Activated T-helper 1 cell treated with anti-CD3 and anti-CD28 coated beads, Interleukin-12 subunit alpha, Interleukin-12 subunit beta, Interleukin-2, Interleukin-4 antibody, amounts not matched to agents 30 ng/mL and 10 ng/mL and 1 ng/mL, durations not matched to agents 14 hours and 24 hours and 36 hours (primary cell): ENCODE measurements at regions of chr6 and their contacts with region 1.

Region 1: GRCh38 chr6:26285143-26286134 is 79.6 kb upstream of the BTN3A2 start:
- DNase-seq: peak; percentile 95
- H3K4me3 Mint-ChIP-seq: peak overlapping the region; percentile 93
- H3K27ac Mint-ChIP-seq: peak overlapping the region; percentile 93
- H3K4me1 Mint-ChIP-seq: peaks cover 44% of the 10 kb centered on the region
- H3K27me3 Mint-ChIP-seq: peaks cover 4% of the 10 kb centered on the region

Region 2: DNA sequence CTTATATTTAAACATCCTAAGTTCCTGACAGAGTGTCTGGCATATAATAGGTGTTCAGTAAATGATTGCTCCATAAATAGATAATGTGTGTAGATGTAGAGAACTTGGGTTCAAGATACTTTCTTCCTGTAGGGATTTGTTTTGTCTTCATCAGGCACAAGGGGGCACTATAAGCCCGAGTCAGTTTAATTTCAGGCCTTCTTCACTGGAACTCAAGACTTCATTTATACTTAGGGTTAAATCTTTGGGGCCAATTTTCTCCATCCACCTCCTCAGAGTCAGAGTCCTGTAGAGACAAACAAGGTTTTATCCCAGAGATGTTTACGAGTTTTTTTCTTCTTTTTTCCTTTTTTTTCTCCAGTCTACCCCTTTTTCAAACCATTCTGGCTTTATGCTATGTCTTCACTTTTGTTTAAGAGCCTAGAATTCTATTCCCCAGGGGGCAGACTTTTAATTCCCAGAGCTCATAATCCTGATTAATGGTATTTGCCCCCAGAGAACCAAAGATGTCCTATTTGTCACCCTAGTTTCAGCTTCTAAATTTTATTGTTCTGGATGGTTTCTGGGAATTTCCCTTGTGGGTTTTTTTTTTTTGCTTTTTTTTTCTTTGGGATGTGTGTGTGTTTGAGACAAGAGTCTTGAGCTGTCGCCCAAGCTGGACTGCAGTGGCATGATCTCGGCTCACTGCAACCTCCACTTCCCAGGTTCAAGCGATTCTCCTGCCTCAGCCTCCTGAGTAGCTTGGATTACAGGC is 109.8 kb before region 1 on chr6:
- intact Hi-C with region 1: loop called (anchors 1 kb)
- DNase-seq: peak; percentile 58
- H3K4me3 Mint-ChIP-seq: peak overlapping the region; percentile 19
- H3K27ac Mint-ChIP-seq: peak overlapping the region; percentile 79
- H3K4me1 Mint-ChIP-seq: peaks cover 51% of the 10 kb centered on the region
- H3K27me3 Mint-ChIP-seq: no peaks in the 10 kb centered on the region

Region 3: GRCh38 chr6:26234421-26235296 is 50.8 kb before region 1 on chr6:
- intact Hi-C with region 1: loop called (anchors 1 kb)
- DNase-seq: peak; percentile 79
- H3K4me3 Mint-ChIP-seq: peak overlapping the region; percentile 89
- H3K27ac Mint-ChIP-seq: peak overlapping the region; percentile 100
- H3K4me1 Mint-ChIP-seq: peaks cover 52% of the 10 kb centered on the region
- H3K27me3 Mint-ChIP-seq: no peaks in the 10 kb centered on the region

Region 4: GRCh38 chr6:26312501-26313390 is 27.3 kb after region 1 on chr6:
- intact Hi-C with region 1: loop called (anchors 1 kb)
- DNase-seq: peak; percentile 72
- H3K4me3 Mint-ChIP-seq: peak overlapping the region; percentile 84
- H3K27ac Mint-ChIP-seq: peak overlapping the region; percentile 92
- H3K4me1 Mint-ChIP-seq: peaks cover 51% of the 10 kb centered on the region
- H3K27me3 Mint-ChIP-seq: no peaks in the 10 kb centered on the region

Region 5: GRCh38 chr6:26553635-26554446 is 268.4 kb after region 1 on chr6:
- intact Hi-C with region 1: loop called (anchors 1 kb)
- DNase-seq: peak; percentile 72
- H3K4me3 Mint-ChIP-seq: no peak overlapping the region
- H3K27ac Mint-ChIP-seq: no peak overlapping the region
- H3K4me1 Mint-ChIP-seq: peaks cover 18% of the 10 kb centered on the region
- H3K27me3 Mint-ChIP-seq: peaks cover 2% of the 10 kb centered on the region

Region 6: DNA sequence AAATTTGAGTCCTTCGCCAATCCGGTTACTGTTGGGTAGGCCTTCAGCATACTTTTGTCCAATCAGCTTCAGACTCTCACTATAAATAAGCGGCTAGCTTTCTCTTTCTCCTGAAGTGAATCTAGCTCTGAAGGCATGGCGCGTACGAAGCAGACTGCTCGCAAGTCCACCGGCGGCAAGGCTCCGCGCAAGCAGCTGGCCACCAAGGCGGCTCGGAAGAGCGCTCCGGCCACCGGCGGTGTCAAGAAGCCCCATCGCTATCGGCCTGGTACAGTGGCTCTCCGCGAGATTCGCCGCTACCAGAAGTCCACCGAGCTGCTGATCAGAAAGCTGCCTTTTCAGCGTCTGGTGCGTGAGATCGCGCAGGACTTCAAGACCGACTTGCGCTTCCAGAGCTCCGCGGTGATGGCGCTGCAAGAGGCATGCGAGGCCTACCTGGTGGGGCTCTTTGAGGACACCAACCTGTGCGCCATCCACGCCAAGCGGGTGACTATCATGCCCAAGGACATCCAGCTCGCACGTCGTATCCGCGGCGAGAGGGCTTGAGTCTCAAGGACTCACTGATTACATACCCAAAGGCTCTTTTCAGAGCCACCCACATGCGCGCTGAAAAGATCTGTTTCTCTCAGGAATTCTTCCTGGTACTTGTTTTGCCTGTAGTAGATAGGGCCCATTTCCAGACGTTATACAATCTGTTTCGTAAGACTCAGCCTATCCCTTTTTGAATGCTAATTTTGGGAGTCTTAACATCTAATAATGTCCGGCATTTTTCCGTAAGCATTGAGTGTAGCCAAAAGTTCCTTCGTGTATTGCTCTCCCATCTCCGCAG is 1524.7 kb after region 1 on chr6:
- intact Hi-C with region 1: loop called (anchors 5 kb)
- DNase-seq: peak; percentile 83
- H3K4me3 Mint-ChIP-seq: peak overlapping the region; percentile 91
- H3K27ac Mint-ChIP-seq: peak overlapping the region; percentile 96
- H3K4me1 Mint-ChIP-seq: peaks cover 78% of the 10 kb centered on the region
- H3K27me3 Mint-ChIP-seq: no peaks in the 10 kb centered on the region